Activated naive CD4-positive, alpha-beta T cell treated with anti-CD3 and anti-CD28 coated beads, Interleukin-2, amount 10 ng/mL, durations not matched to agents 7 days and 5 days (primary cell): ENCODE measurements at regions of chr12 and their contacts with region 1.

Region 1: GRCh38 chr12:7460375-7461259 is 16.7 kb upstream of the CD163L1 start:
- DNase-seq: peak; percentile 69
- H3K4me3 Mint-ChIP-seq: no peak overlapping the region
- H3K27ac Mint-ChIP-seq: no peak overlapping the region
- H3K4me1 Mint-ChIP-seq: no peaks in the 10 kb centered on the region
- H3K27me3 Mint-ChIP-seq: peaks cover 3% of the 10 kb centered on the region

Region 2: GRCh38 chr12:7219599-7220243 is 240.9 kb before region 1 on chr12:
- CTCF ChIA-PET with region 1: interaction called, 15 read pairs
- DNase-seq: peak; percentile 82
- H3K4me3 Mint-ChIP-seq: no peak overlapping the region
- H3K27ac Mint-ChIP-seq: no peak overlapping the region
- H3K4me1 Mint-ChIP-seq: no peaks in the 10 kb centered on the region
- H3K27me3 Mint-ChIP-seq: peaks cover 4% of the 10 kb centered on the region